MCF 10A (cell line): ENCODE measurements at regions of chr14 and their contacts with region 1.

Region 1: DNA sequence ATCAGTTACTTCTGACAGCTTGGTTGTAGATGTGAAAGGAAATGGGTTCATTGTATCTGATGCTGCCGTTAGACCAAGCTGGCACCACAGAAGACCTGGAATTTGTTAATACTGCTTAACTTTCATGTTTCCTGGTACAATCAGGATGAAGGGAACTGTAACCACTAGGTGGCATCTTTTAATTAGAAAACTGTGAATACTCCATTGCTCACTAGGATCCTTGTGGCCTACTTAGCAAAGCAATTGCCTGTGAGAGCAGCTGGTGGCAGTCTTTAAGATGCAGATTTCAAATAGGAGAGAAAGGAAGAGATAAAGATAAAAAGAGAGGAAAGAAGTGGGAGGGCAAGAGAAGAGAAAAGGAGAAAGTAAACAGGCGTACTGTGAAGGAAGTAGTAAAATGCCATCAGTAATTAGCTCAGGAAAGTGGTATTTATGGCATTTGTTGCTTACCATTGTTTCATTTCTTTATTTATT is 114.5 kb downstream of the RAD51B start:
- DNase-seq: peak; percentile 74
- H3K4me3 Mint-ChIP-seq: no peak overlapping the region
- H3K27ac Mint-ChIP-seq: peak overlapping the region; percentile 26
- H3K4me1 Mint-ChIP-seq: peaks cover 29% of the 10 kb centered on the region
- H3K27me3 Mint-ChIP-seq: no peaks in the 10 kb centered on the region
- CTCF ChIP-seq: peak; percentile 52

Region 2: DNA sequence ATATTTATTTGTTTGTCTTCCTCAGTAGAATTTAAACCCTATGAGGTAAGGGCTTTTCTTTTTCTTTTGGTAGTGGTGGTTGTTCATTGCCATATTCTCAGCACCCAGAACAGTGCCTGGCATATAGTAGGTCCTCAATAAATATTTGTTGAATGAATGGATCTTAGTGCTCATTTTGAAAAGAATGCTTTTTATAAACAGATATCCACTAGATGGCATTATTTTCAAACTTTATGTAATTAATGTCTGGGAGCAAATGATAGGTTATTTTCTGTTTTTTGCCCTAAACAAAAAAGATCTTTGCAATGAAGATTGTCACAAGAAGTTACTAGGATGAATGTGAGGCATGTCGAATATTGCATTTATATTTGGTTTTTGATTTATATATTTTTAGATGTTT is 50.3 kb before region 1 on chr14:
- CTCF ChIA-PET with region 1: interaction called, 12 read pairs
- POLR2A ChIA-PET with region 1: no interaction called
- intact Hi-C with region 1: no loop called
- DNase-seq: peak; percentile 8
- H3K4me3 Mint-ChIP-seq: no peak overlapping the region
- H3K27ac Mint-ChIP-seq: no peak overlapping the region
- H3K4me1 Mint-ChIP-seq: peaks cover 6% of the 10 kb centered on the region
- H3K27me3 Mint-ChIP-seq: no peaks in the 10 kb centered on the region
- CTCF ChIP-seq: peak; percentile 38

Region 3: GRCh38 chr14:67987606-67988005 is 53.6 kb after region 1 on chr14:
- CTCF ChIA-PET with region 1: no interaction called
- POLR2A ChIA-PET with region 1: no interaction called
- intact Hi-C with region 1: no loop called
- DNase-seq: no peak
- H3K4me3 Mint-ChIP-seq: no peak overlapping the region
- H3K27ac Mint-ChIP-seq: no peak overlapping the region
- H3K4me1 Mint-ChIP-seq: no peaks in the 10 kb centered on the region
- H3K27me3 Mint-ChIP-seq: no peaks in the 10 kb centered on the region
- CTCF ChIP-seq: no peak

Region 4: GRCh38 chr14:68816262-68816942 is 882.4 kb after region 1 on chr14:
- CTCF ChIA-PET with region 1: interaction called, 46 read pairs
- POLR2A ChIA-PET with region 1: interaction called, 7 read pairs
- intact Hi-C with region 1: loop called (anchors 2 kb)
- DNase-seq: peak; percentile 85
- H3K4me3 Mint-ChIP-seq: peak overlapping the region; percentile 49
- H3K27ac Mint-ChIP-seq: peak overlapping the region; percentile 88
- H3K4me1 Mint-ChIP-seq: peaks cover 20% of the 10 kb centered on the region
- H3K27me3 Mint-ChIP-seq: no peaks in the 10 kb centered on the region
- CTCF ChIP-seq: peak; percentile 98

Region 5: DNA sequence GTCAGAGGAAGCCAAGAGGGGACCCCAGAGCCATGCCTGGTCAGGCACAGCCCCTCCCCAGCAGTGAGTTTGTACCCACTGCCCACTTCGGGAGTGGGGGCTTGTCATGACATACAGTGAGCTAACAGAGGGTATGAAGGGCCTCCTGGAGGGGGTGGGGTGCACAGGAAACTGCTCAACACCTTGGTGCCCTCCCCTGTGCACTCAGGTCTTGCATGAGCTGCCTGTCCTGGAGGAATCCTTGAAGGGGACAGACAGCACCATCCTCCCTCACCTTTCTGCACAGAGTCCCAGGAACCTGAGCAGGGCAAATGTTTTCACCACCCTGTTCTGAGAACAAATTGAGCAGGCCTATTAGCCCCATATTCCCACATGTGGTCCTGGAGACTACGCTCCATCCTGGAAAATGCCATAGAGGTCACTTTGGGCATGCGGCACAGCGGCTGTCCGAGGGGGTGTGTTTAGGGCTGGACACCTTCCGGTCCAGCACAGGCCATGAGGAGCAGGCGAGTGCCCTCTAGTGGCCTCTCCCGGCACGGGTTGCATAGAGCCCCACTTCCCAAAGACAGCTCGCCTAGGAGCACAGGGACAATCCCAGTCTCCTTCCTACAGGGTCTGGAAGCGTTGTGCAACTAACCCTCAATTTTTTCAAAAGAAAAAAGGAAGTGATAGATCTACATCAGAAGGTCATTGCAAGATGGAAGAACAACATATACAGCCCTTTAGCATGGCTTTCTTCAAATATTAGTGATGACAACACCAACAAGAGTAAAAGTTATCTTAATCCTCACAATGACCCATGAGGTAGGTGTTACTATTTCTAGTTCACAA is 890.7 kb after region 1 on chr14:
- CTCF ChIA-PET with region 1: interaction called, 27 read pairs
- POLR2A ChIA-PET with region 1: no interaction called
- intact Hi-C with region 1: no loop called
- DNase-seq: peak; percentile 86
- H3K4me3 Mint-ChIP-seq: no peak overlapping the region
- H3K27ac Mint-ChIP-seq: no peak overlapping the region
- H3K4me1 Mint-ChIP-seq: peaks cover 8% of the 10 kb centered on the region
- H3K27me3 Mint-ChIP-seq: no peaks in the 10 kb centered on the region
- CTCF ChIP-seq: peak; percentile 80